Mammary epithelial cell (primary cell): ENCODE measurements at regions of chr15 and their contacts with region 1.

Region 1: GRCh38 chr15:90956594-90957030 is 1.9 kb downstream of the RCCD1 start:
- DNase-seq: peak; percentile 41
- H3K4me3 ChIP-seq: peak overlapping the region; percentile 45 to 60 (median 46)
- H3K27ac ChIP-seq: no peak overlapping the region
- H3K4me1 ChIP-seq: peaks cover 19% of the 10 kb centered on the region
- H3K27me3 ChIP-seq: no peaks in the 10 kb centered on the region
- CTCF ChIP-seq: peak; percentile 73 to 95

Region 2: GRCh38 chr15:89936051-89936785 is 1020.4 kb before region 1 on chr15:
- CTCF ChIA-PET with region 1: interaction called, 19 read pairs
- dilution Hi-C with region 1: no loop called
- in situ Hi-C with region 1: no loop called
- intact Hi-C with region 1: no loop called
- DNase-seq: no peak
- H3K4me3 ChIP-seq: no peak overlapping the region
- H3K27ac ChIP-seq: no peak overlapping the region
- H3K4me1 ChIP-seq: peaks cover 5% of the 10 kb centered on the region
- H3K27me3 ChIP-seq: no peaks in the 10 kb centered on the region
- CTCF ChIP-seq: no peak

Region 3: DNA sequence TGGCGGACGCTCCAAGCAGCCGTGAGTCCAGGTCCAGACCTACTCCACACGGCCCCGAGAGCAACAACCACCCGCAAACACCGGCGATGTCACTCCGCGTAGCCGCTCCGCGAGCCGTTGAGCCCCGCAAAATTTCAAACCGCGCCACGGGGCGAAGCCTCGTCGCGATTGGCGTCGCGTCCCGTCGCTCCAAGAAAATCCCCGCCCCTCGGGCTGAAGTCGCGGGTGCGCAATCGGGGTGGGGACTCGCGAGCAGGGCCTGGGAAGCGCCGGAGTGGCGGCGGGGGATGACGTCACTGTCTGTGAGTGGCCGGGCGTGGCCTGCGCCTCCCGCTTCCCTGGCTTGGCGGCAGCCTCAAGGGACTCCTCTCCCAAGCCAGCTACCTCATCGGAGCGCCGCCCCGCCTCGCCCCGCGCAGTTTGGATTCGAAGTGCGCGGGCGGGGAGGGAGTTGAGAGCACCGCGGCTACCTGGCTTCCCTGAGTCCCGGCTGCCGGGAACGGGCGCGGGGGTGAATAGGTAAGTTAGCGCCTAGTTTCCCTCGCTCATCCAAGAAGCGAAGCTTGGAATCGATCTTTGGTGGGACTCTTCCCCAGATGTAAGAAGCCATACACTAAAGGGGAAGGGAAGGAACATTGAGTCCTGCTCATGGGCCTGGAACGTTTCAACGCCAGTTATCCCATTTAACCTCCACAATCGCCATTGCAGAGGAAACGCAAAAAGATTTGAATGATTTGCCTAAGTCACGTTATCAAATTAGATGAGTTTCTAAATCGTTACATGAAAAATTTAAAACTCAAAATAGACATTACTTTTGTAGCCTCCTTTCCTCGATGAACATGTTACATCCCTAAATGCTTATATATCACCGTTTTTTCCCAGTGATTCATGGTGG is 38.1 kb after region 1 on chr15 and contains the start of gene PRC1:
- CTCF ChIA-PET with region 1: no interaction called
- dilution Hi-C with region 1: no loop called
- in situ Hi-C with region 1: no loop called
- intact Hi-C with region 1: loop called (anchors 2 kb)
- DNase-seq: peak; percentile 99
- H3K4me3 ChIP-seq: peak within 1 kb of the TSS; percentile 83 to 100 (median 96)
- H3K27ac ChIP-seq: peak within 1 kb of the TSS; percentile 94
- H3K4me1 ChIP-seq: peaks cover 8% of the 10 kb centered on the region
- H3K27me3 ChIP-seq: no peaks in the 10 kb centered on the region
- CTCF ChIP-seq: no peak
- total RNA-seq, gene PRC1: 4.5 to 100 TPM

Region 4: GRCh38 chr15:91007266-91007665 is 50.7 kb after region 1 on chr15:
- CTCF ChIA-PET with region 1: no interaction called
- dilution Hi-C with region 1: no loop called
- in situ Hi-C with region 1: no loop called
- intact Hi-C with region 1: no loop called
- DNase-seq: no peak
- H3K4me3 ChIP-seq: no peak overlapping the region
- H3K27ac ChIP-seq: no peak overlapping the region
- H3K4me1 ChIP-seq: no peaks in the 10 kb centered on the region
- H3K27me3 ChIP-seq: no peaks in the 10 kb centered on the region
- CTCF ChIP-seq: no peak

Region 5: GRCh38 chr15:91032919-91033803 is 76.5 kb after region 1 on chr15:
- CTCF ChIA-PET with region 1: interaction called, 14 read pairs
- dilution Hi-C with region 1: no loop called
- in situ Hi-C with region 1: no loop called
- intact Hi-C with region 1: loop called (anchors 1 kb)
- DNase-seq: peak; percentile 63
- H3K4me3 ChIP-seq: no peak overlapping the region
- H3K27ac ChIP-seq: no peak overlapping the region
- H3K4me1 ChIP-seq: no peaks in the 10 kb centered on the region
- H3K27me3 ChIP-seq: peaks cover 5% of the 10 kb centered on the region
- CTCF ChIP-seq: peak; percentile 59 to 80

Region 6: DNA sequence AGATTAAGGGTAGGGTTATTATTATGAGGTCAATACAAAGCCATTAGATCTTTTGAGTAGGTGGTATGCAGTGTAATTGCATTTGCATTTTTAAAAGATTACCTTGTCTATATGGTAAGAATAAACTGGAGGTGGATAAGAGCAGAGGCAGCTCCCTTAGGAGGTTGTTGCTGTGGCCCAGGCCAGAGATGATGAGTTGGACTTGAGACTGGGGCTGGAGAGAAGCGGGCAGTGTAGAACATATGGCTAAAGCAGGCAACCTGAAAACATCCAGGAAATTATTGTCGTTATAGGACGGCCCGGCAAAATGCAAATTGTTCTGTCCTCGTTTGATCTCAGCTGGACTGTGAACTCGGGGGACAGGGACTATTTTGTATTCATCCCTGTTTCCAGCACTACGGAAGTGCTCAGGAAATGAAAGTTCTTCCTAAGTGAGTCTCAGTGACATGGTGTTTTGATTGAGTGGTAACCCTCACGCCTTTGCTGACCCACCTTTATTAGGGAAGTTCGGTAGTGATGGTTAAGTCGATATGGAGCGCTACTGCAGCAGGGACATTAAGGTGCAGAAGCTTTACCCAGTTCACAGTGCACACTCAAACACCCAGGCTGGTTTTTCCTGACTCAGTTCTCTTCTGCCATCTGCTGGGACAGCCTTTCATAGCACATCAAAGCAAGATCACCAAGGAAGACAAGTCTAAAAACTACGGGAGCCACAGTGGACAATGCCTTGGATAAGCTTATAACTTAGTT is 92.9 kb after region 1 on chr15:
- CTCF ChIA-PET with region 1: no interaction called
- dilution Hi-C with region 1: no loop called
- in situ Hi-C with region 1: no loop called
- intact Hi-C with region 1: loop called (anchors 1 kb)
- DNase-seq: peak; percentile 58
- H3K4me3 ChIP-seq: no peak overlapping the region
- H3K27ac ChIP-seq: no peak overlapping the region
- H3K4me1 ChIP-seq: no peaks in the 10 kb centered on the region
- H3K27me3 ChIP-seq: peaks cover 2% of the 10 kb centered on the region
- CTCF ChIP-seq: peak; percentile 52 to 76

Region 7: GRCh38 chr15:91165850-91166249 is 209.2 kb after region 1 on chr15:
- CTCF ChIA-PET with region 1: no interaction called
- dilution Hi-C with region 1: no loop called
- in situ Hi-C with region 1: no loop called
- intact Hi-C with region 1: no loop called
- DNase-seq: no peak
- H3K4me3 ChIP-seq: no peak overlapping the region
- H3K27ac ChIP-seq: no peak overlapping the region
- H3K4me1 ChIP-seq: no peaks in the 10 kb centered on the region
- H3K27me3 ChIP-seq: no peaks in the 10 kb centered on the region
- CTCF ChIP-seq: no peak